ENCODE measurements at regions of chr7 and their contacts with region 1.

Region 1: GRCh38 chr7:130896898-130897514 is 163.0 kb upstream of the KLF14 start:
- DNase-seq: peak; percentile 62 to 90
- ATAC-seq: peak; percentile 81 to 95 (median 89)
- H3K4me3 ChIP-seq: no peak overlapping the region
- H3K4me3 Mint-ChIP-seq: peak overlapping the region; percentile 31
- H3K27ac ChIP-seq: no peak overlapping the region
- H3K27ac Mint-ChIP-seq: peak overlapping the region; percentile 45 to 87
- H3K4me1 ChIP-seq: peaks cover 25% of the 10 kb centered on the region
- H3K4me1 Mint-ChIP-seq: peaks cover 41 to 57% of the 10 kb centered on the region in 2 donors
- H3K27me3 ChIP-seq: no peaks in the 10 kb centered on the region
- H3K27me3 Mint-ChIP-seq: no peaks in the 10 kb centered on the region
- CTCF ChIP-seq: peak; percentile 95

Region 2: DNA sequence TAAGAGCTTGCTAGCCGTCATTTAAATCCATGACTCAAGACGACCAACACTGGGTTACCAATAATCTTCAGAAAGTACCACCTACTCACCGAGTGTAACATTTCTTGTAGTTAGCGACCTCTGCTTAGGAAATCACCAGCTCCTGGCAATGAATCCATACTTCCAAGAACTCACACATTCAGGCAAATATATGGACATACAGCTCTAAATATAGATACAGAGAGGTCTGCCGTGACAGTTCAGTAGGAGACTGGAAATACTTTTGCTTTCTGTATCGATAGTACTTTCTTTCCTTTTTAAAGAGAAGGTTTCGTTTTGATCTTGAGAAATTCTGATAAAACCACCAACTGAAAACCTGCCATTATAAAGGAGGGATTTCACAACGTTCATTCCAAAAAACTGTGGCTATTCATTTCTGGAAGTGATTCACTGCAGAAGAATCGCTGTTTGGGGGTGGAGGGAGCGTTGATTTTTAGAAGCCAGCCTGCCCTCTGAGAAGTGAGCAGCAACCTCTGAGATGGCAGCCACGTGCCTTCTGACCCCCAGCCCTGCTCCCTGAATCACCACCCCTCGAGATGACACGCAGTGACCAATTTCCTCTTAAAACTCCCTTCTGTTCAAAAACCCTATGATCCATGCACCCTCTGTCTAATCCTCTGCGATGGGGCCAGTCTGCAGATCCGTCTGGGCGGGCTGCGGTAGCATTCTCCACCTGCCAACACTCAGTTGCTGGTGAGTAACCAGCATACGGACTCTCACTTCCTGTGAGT is 16.0 kb after region 1 on chr7:
- intact Hi-C with region 1: loop called (anchors 2 kb)
- DNase-seq: peak; percentile 76 to 92
- ATAC-seq: peak; percentile 79 to 92 (median 90)
- H3K4me3 ChIP-seq: peak overlapping the region; percentile 59
- H3K4me3 Mint-ChIP-seq: peak overlapping the region; percentile 92
- H3K27ac ChIP-seq: peak overlapping the region; percentile 97
- H3K27ac Mint-ChIP-seq: peak overlapping the region; percentile 92 to 93
- H3K4me1 ChIP-seq: peaks cover 52% of the 10 kb centered on the region
- H3K4me1 Mint-ChIP-seq: peaks cover 82 to 83% of the 10 kb centered on the region in 2 donors
- H3K27me3 ChIP-seq: no peaks in the 10 kb centered on the region
- H3K27me3 Mint-ChIP-seq: no peaks in the 10 kb centered on the region
- CTCF ChIP-seq: no peak

Region 3: DNA sequence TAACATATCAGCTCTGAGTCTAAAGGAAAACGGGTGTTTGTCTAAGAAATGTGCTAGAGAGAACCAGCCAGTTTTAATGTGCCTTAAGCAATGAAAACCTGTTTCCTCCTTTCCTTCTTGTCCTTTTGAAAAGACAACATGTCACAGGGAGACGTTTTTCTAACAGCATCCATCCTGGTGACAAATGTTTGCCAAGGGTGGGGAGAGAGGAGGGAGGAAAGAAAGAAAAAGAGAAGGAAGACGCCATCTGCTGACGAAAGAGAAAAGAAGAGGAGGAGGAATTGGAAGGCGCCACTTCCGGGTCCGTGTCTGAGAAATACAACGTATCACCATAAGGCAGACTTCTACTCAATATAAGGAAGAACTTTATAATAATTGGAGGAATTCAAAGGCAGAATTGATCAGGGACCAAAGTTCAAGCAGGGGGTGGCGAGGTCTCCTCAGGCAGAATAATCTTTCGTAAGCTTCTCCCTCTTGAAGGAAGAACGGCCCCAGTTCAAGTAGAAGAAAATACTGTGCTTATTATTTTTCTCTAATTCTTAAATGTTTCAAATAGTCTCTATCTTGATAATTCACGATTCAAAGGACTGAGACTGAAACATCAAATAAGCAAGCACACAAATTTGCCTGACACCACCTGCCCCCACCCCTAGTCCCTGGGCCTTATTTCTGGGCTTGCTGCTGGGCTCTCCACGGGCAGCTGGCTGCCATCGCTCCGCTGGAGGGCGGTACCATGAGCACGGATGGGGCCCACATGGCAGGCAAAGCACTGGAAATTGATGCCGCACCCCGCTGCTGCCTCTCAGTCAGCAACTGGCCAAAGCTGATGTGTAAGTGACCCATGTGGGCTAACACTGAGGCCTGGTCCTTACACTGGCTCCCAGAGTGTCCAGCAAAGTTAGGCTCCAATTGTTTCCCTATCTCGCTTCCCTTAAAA is 110.7 kb after region 1 on chr7:
- intact Hi-C with region 1: loop called (anchors 1 kb)
- DNase-seq: peak in 1 of 2 donors; percentile 83
- ATAC-seq: peak; percentile 61 to 68 (median 67)
- H3K4me3 ChIP-seq: no peak overlapping the region
- H3K4me3 Mint-ChIP-seq: peak overlapping the region; percentile 77
- H3K27ac ChIP-seq: peak overlapping the region; percentile 62
- H3K27ac Mint-ChIP-seq: peak overlapping the region; percentile 77 to 88
- H3K4me1 ChIP-seq: peaks cover 28% of the 10 kb centered on the region
- H3K4me1 Mint-ChIP-seq: peaks cover 72 to 91% of the 10 kb centered on the region in 2 donors
- H3K27me3 ChIP-seq: no peaks in the 10 kb centered on the region
- H3K27me3 Mint-ChIP-seq: no peaks in the 10 kb centered on the region
- CTCF ChIP-seq: peak; percentile 52

Region 4: GRCh38 chr7:131040467-131040932 is 143.5 kb after region 1 on chr7:
- intact Hi-C with region 1: loop called (anchors 1 kb)
- DNase-seq: peak in 1 of 2 donors; percentile 83
- ATAC-seq: peak; percentile 49 to 74 (median 50)
- H3K4me3 ChIP-seq: no peak overlapping the region
- H3K4me3 Mint-ChIP-seq: peak overlapping the region; percentile 31
- H3K27ac ChIP-seq: peak overlapping the region; percentile 41
- H3K27ac Mint-ChIP-seq: peak overlapping the region; percentile 65 to 68
- H3K4me1 ChIP-seq: no peaks in the 10 kb centered on the region
- H3K4me1 Mint-ChIP-seq: peaks cover 63 to 66% of the 10 kb centered on the region in 2 donors
- H3K27me3 ChIP-seq: no peaks in the 10 kb centered on the region
- H3K27me3 Mint-ChIP-seq: no peaks in the 10 kb centered on the region
- CTCF ChIP-seq: peak; percentile 90

Region 5: GRCh38 chr7:131513245-131514061 is 616.4 kb after region 1 on chr7:
- intact Hi-C with region 1: loop called (anchors 2 kb)
- DNase-seq: peak; percentile 73 to 87
- ATAC-seq: peak; percentile 91 to 100 (median 99)
- H3K4me3 ChIP-seq: no peak overlapping the region
- H3K4me3 Mint-ChIP-seq: no peak overlapping the region
- H3K27ac ChIP-seq: no peak overlapping the region
- H3K27ac Mint-ChIP-seq: peak overlapping the region in 1 of 2 donors; percentile 70
- H3K4me1 ChIP-seq: peaks cover 7% of the 10 kb centered on the region
- H3K4me1 Mint-ChIP-seq: peaks cover 12 to 24% of the 10 kb centered on the region in 2 donors
- H3K27me3 ChIP-seq: no peaks in the 10 kb centered on the region
- H3K27me3 Mint-ChIP-seq: peaks cover 10 to 12% of the 10 kb centered on the region in 2 donors
- CTCF ChIP-seq: peak; percentile 97

Measured in natural killer cell (primary cell).